ENCODE measurements at regions of chr3 and their contacts with region 1.

Region 1: DNA sequence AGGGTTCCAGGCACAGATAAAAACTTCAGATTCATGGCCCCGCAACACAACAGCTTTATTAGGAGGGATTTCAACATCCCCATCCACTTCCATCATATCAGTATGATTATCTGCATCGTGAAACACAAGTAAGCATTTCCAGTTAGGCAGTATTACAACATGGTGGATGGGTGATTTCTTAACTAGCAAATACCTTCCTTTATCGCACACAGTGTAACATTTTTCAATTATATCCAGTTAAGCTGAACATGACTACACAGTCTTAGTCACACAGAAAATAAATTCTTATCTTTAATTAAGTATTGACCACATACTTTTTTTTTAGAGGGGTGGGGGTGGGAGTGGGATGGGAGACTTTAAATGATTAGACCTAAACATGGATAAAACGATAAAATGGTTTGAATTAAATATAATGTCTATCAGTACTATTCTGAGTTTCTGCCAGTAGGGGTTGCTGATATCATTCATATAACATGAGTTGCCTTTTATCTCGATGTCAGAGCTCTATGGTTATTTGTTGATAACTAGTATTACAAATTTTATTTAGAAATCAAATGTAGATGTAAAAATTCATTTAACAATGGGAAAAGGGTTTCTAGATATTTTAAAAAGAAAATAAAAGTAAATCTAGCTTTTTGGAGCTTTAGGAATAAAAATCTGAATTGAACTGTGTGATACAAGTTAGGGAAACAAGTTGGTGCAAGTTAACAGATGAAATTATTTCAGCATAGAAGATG is 146.6 kb downstream of the TBL1XR1 start:
- DNase-seq: no peak
- CTCF ChIP-seq: peak; percentile 50

Region 2: DNA sequence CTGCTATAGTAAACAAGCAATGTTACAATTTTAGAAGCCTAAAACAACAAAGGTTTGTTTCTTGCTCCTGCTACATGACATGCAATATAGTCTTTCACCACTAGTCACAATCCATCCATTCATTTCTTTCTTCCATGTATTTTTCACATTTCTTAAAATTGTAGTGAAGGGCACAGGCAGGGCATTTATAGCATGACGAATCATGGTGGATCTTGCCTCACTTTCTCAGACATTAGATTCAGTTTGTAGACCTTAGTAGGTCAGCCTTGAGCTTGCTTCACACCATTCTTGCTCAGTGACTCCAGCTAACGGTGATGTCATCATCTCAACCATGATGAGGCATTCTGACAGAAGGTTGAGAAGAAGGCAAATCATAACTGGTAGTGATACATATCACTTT is 400.2 kb before region 1 on chr3:
- in situ Hi-C with region 1: no loop called
- DNase-seq: no peak
- CTCF ChIP-seq: peak; percentile 4

Region 3: DNA sequence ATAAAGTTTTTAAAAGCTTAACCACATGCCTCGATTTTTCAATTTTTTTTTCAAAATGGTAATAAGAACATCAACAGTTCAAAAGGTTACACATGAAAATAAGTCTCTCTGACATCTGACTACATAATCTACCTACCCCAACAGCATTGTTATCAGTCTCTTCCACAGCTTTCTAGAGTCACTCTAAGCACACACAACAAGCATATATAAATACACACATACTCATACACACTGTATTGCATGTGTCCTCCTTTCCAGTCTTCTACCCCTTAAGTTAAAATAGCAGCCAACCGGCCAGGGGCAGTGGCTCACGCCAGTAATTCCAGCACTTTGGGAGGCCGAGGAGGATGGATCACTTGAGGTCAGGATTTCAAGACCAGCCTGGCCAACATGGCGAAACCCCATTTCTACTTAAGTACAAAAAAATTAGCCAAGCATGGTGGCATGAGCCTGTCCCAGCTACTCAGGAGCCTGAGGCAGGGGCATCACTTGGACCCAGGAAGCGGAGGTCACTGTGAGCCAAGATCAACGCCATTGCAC is 134.4 kb after region 1 on chr3:
- in situ Hi-C with region 1: loop called (anchors 10 kb)
- DNase-seq: no peak
- CTCF ChIP-seq: no peak

Region 4: DNA sequence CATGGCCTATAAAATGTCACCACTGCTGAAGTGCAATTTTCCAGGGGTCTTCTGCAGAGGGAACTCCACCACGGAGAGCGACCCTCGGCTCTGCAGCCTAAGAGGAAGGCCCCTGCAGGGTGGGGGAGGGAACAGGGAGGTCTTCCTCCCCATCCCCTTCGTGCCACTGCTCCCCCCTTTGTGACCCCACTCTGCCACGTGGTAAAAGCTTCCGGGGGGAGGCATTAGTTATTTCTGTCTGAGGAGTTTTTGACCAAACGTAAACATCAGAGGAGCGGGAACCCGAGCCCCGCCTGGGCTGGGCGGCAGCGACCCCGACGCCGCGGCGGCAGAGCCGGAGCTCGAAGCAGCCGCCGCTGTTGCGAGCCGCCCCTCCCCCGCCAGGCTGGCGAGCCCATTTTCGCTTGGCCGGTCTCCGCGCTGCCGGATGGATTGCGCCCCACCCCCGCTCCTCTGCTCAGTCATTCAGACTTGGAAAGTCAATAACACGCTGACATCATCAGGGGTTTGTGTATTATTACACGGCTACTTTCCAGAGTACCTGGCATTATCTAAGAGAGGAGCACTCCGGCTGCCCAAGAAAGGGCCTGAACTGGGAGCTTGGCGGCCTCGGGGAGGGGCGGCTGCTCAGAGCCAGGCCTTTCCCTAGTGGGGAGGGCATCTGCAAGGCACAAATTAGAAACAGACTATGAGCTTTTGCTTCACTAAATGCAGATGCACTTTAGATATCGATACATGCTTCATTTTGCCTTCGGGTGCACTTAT is 309.1 kb after region 1 on chr3:
- in situ Hi-C with region 1: loop called (anchors 10 kb)
- DNase-seq: peak; percentile 92
- CTCF ChIP-seq: no peak

Measured in GM13977 (cell line).